A673 (cell line): ENCODE measurements at regions of chr16 and their contacts with region 1.

Region 1: DNA sequence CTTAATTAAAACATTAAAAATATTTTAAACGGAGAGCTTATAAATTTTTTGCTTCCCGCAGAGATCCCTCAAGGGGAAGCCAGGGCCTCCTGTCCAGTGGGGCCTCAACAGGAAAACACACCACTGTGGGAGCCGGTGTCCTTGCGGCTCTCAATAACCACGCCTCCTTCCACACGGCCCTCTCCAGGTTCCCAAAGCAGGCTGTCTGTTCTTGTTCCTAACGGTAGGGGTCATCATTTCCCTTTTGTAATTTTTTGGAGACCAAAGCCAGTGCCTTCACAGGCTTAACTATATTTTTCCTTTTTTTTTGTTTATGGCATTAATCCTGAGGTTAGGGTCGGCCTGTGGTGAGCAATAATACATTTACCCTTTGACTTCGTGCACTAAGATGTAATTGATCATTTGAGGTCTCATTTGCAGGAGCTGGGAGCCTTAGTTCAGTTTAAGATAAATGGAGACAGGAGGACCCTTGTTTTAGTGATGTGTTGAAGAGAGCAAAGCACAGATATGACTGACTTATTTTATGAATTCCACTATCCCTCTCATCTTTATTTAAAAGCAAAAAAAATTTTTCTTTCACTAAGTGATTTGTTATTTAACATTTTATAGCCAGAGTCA is 77.5 kb upstream of the N4BP1 start:
- DNase-seq: peak; percentile 82
- H3K4me3 ChIP-seq: no peak overlapping the region
- H3K27ac ChIP-seq: no peak overlapping the region
- H3K4me1 ChIP-seq: no peaks in the 10 kb centered on the region
- H3K27me3 ChIP-seq: peaks cover 27% of the 10 kb centered on the region
- CTCF ChIP-seq: peak; percentile 85

Region 2: GRCh38 chr16:48335951-48336350 is 351.6 kb before region 1 on chr16:
- CTCF ChIA-PET with region 1: no interaction called
- POLR2A ChIA-PET with region 1: no interaction called
- intact Hi-C with region 1: no loop called
- DNase-seq: no peak
- H3K4me3 ChIP-seq: no peak overlapping the region
- H3K27ac ChIP-seq: no peak overlapping the region
- H3K4me1 ChIP-seq: no peaks in the 10 kb centered on the region
- H3K27me3 ChIP-seq: no peaks in the 10 kb centered on the region
- CTCF ChIP-seq: no peak

Region 3: GRCh38 chr16:49183911-49184310 is 496.4 kb after region 1 on chr16:
- CTCF ChIA-PET with region 1: no interaction called
- POLR2A ChIA-PET with region 1: no interaction called
- intact Hi-C with region 1: loop called (anchors 10 kb)
- DNase-seq: peak; percentile 7
- H3K4me3 ChIP-seq: no peak overlapping the region
- H3K27ac ChIP-seq: no peak overlapping the region
- H3K4me1 ChIP-seq: no peaks in the 10 kb centered on the region
- H3K27me3 ChIP-seq: no peaks in the 10 kb centered on the region
- CTCF ChIP-seq: peak; percentile 50

Region 4: GRCh38 chr16:49350265-49351095 is 663.0 kb after region 1 on chr16:
- CTCF ChIA-PET with region 1: no interaction called
- POLR2A ChIA-PET with region 1: no interaction called
- intact Hi-C with region 1: loop called (anchors 1 kb)
- DNase-seq: peak; percentile 71
- H3K4me3 ChIP-seq: no peak overlapping the region
- H3K27ac ChIP-seq: no peak overlapping the region
- H3K4me1 ChIP-seq: no peaks in the 10 kb centered on the region
- H3K27me3 ChIP-seq: peaks cover 18% of the 10 kb centered on the region
- CTCF ChIP-seq: peak; percentile 90